Motor neuron (in vitro differentiated cells): ENCODE measurements at regions of chr15 and their contacts with region 1.

Region 1: GRCh38 chr15:100349696-100350433 is 8.1 kb upstream of the ADAMTS17 start:
- ATAC-seq: peak; percentile 94 to 98 (median 97)
- H3K4me3 ChIP-seq: peak overlapping the region; percentile 26 to 65 (median 46)
- H3K27ac ChIP-seq: peak overlapping the region in 1 of 2 donors; percentile 24
- H3K4me1 ChIP-seq: no peaks in the 10 kb centered on the region

Region 2: GRCh38 chr15:99928429-99928981 is 421.4 kb before region 1 on chr15:
- in situ Hi-C with region 1: loop called in 2 of 9 experiments (anchors 25 kb)
- ATAC-seq: peak; percentile 88 to 96 (median 92)
- H3K4me3 ChIP-seq: peak overlapping the region; percentile 35 to 50 (median 45)
- H3K27ac ChIP-seq: no peak overlapping the region
- H3K4me1 ChIP-seq: peaks cover 0 to 5% of the 10 kb centered on the region in 2 donors

Region 3: GRCh38 chr15:99961011-99961441 is 388.8 kb before region 1 on chr15:
- in situ Hi-C with region 1: loop called in 1 of 9 experiments (anchors 25 kb)
- ATAC-seq: peak in 3 of 8 experiments; percentile 35 to 62 (median 58)
- H3K4me3 ChIP-seq: no peak overlapping the region
- H3K27ac ChIP-seq: no peak overlapping the region
- H3K4me1 ChIP-seq: no peaks in the 10 kb centered on the region

Region 4: DNA sequence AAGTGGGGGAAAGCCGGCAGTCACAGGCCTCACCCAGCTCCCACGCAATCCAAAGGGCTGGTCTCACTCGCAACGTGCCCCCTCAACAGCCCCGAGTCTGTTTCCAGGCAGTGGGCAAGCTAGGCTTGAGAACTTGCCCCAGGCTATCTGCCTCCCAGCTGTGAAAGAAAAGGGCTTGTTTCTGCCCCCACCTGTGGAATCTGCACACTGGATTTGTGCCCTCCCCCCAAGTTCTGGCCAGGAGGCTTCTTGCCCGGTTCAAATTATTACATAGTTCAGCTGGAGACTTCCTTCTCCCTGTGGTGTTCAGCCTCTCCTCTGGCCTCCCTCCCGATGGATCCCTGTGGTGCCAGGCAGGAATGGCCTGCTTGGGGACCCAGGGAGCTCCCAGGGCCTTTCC is 332.7 kb before region 1 on chr15:
- in situ Hi-C with region 1: no loop called
- ATAC-seq: no peak
- H3K4me3 ChIP-seq: no peak overlapping the region
- H3K27ac ChIP-seq: no peak overlapping the region
- H3K4me1 ChIP-seq: no peaks in the 10 kb centered on the region

Region 5: GRCh38 chr15:100053474-100054121 is 296.3 kb before region 1 on chr15:
- in situ Hi-C with region 1: no loop called
- ATAC-seq: no peak
- H3K4me3 ChIP-seq: no peak overlapping the region
- H3K27ac ChIP-seq: no peak overlapping the region
- H3K4me1 ChIP-seq: no peaks in the 10 kb centered on the region

Region 6: DNA sequence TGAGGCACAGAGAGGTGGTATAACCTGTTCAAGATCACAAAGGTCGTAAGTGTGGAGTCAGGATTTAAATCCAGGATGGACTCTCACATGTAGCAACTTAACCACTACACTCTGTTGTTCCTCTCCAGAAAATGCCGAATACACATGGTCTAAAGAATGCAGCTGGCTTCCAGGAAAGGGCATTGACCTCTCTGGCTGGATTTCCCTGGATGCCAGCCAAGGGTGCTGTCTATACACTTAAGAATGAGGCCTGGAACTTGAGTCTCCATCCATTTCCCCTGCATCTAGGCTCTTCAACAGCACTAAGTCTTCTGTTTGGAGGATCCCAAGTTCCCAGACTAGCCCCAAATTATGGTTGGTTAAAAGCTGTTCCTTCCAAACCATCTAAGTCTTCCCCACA is 118.4 kb after region 1 on chr15:
- in situ Hi-C with region 1: loop called in 1 of 9 experiments (anchors 25 kb)
- ATAC-seq: peak in 2 of 8 experiments; percentile 49 to 53
- H3K4me3 ChIP-seq: no peak overlapping the region
- H3K27ac ChIP-seq: no peak overlapping the region
- H3K4me1 ChIP-seq: peaks cover 6 to 7% of the 10 kb centered on the region in 2 donors

Region 7: DNA sequence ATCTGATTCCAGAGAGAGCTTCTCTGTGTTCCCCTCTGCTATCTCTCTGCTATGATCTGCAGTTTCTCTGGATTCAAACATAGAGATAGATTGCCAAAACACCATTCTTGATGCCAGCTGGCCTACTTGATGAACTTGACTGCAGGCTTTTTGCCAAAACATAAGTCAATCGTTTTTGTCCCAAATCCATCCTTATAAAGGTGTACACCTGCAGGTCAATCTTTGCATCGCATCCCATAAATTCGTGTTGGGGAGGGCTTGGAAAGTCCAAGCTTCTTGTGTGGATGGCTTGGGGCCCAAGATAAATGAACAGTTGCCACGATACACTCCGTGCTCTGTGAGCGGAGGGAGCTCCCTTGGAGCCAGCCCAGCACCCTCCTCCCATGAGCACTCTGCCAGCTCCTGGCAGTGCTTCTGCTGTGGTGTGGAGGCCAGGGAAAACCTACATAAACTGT is 176.2 kb after region 1 on chr15:
- in situ Hi-C with region 1: loop called in 1 of 9 experiments (anchors 25 kb)
- ATAC-seq: no peak
- H3K4me3 ChIP-seq: no peak overlapping the region
- H3K27ac ChIP-seq: no peak overlapping the region
- H3K4me1 ChIP-seq: no peaks in the 10 kb centered on the region